Activated B cell treated with CpG ODN at 0.5 μM for 24 hours (primary cell): ENCODE measurements at regions of chr10 and their contacts with region 1.

Region 1: DNA sequence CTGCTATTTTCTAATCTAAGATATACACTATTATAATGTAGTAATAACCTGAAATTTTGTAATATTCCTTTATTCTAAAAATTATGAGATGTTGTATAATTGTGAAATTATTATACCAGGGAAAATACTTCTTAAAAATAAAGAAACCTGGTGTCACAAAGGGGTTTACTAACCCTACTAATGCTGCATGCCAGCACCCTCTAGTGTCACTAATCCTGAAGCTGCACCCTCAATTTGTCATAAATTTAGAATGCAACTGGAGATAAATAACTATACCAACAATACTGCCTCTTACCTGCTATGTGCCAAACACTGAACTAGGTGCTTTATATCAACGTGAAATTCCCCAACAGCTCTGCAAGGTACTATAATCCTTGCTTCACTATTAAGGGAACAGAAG is 30.8 kb downstream of the TM9SF3 start:
- DNase-seq: no peak
- ATAC-seq: no peak
- H3K4me3 Mint-ChIP-seq: no peak overlapping the region
- H3K27ac Mint-ChIP-seq: no peak overlapping the region
- H3K4me1 Mint-ChIP-seq: no peaks in the 10 kb centered on the region
- H3K27me3 Mint-ChIP-seq: no peaks in the 10 kb centered on the region
- CTCF ChIP-seq: no peak

Region 2: DNA sequence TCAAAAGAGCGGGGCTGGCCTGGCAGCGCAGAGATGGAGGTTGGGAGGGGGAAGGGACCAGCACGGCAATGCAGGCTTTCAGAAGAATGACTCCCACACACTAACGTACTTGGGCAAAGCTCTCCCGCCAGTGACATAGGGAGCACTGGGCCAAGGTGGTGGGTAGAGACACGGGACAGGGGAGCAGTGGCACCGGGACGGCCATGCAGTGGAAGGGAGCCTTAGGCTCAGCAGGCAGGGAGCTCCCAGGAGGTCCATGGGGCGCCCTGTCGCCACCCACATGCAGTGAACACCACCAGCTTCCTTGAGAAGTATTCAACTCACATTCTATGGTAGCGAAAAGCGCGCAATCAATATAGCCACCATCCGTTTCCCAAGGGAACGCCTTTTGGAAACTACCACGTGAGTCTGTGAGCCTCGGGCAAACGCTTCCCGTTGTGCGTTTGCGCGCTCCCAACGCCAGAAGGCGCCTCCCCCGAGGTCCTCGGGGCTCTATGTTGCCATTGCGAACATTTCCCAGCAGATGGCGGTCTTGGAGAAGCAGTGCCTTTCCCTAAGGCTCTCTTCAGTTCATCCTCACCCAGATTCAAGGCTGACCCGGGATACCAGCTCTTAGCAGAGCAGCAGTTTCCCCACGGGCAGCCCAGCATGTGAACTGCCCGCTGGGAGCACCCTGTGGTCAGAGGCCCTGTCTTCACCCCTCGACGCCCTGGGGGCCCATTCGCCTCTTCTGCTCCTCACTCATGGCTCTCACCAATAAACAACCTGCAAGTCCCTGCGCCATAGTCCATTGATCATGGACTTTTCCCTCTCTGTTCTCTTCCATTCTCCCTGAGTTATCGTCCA is 180.8 kb before region 1 on chr10:
- CTCF ChIA-PET with region 1: interaction called, 4 read pairs
- POLR2A ChIA-PET with region 1: no interaction called
- intact Hi-C with region 1: loop called (anchors 1 kb)
- DNase-seq: peak; percentile 61
- ATAC-seq: peak; percentile 92
- H3K4me3 Mint-ChIP-seq: peak overlapping the region; percentile 78
- H3K27ac Mint-ChIP-seq: no peak overlapping the region
- H3K4me1 Mint-ChIP-seq: peaks cover 6% of the 10 kb centered on the region
- H3K27me3 Mint-ChIP-seq: peaks cover 13% of the 10 kb centered on the region
- CTCF ChIP-seq: peak; percentile 84

Region 3: GRCh38 chr10:96491299-96491698 is 64.7 kb before region 1 on chr10:
- CTCF ChIA-PET with region 1: interaction called, 6 read pairs
- POLR2A ChIA-PET with region 1: no interaction called
- intact Hi-C with region 1: loop called (anchors 2 kb)
- DNase-seq: no peak
- ATAC-seq: no peak
- H3K4me3 Mint-ChIP-seq: no peak overlapping the region
- H3K27ac Mint-ChIP-seq: no peak overlapping the region
- H3K4me1 Mint-ChIP-seq: no peaks in the 10 kb centered on the region
- H3K27me3 Mint-ChIP-seq: peaks cover 8% of the 10 kb centered on the region
- CTCF ChIP-seq: no peak

Region 4: DNA sequence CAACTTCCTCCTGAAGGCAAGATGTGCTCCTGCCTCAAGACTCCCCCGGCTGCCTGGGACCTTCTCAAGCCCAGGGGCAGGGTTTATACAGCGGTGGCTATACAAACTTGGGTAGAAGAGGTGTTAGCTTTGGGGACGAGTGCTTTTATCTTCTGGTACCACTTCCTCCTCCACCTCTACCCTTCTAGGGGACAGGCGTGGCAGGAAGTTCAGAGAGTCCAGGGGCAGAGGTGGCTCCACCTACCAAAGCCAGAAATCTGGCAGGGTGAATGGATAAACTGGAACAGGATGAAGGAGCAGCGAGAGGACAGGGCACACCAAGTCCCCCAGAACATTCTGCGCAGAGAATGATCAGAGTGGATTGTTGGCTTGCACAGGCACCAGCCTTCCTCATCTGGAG is 54.8 kb after region 1 on chr10:
- CTCF ChIA-PET with region 1: no interaction called
- POLR2A ChIA-PET with region 1: no interaction called
- intact Hi-C with region 1: no loop called
- DNase-seq: no peak
- ATAC-seq: no peak
- H3K4me3 Mint-ChIP-seq: no peak overlapping the region
- H3K27ac Mint-ChIP-seq: no peak overlapping the region
- H3K4me1 Mint-ChIP-seq: no peaks in the 10 kb centered on the region
- H3K27me3 Mint-ChIP-seq: no peaks in the 10 kb centered on the region
- CTCF ChIP-seq: no peak